ENCODE measurements at regions of chr17 and their contacts with region 1.

Region 1: DNA sequence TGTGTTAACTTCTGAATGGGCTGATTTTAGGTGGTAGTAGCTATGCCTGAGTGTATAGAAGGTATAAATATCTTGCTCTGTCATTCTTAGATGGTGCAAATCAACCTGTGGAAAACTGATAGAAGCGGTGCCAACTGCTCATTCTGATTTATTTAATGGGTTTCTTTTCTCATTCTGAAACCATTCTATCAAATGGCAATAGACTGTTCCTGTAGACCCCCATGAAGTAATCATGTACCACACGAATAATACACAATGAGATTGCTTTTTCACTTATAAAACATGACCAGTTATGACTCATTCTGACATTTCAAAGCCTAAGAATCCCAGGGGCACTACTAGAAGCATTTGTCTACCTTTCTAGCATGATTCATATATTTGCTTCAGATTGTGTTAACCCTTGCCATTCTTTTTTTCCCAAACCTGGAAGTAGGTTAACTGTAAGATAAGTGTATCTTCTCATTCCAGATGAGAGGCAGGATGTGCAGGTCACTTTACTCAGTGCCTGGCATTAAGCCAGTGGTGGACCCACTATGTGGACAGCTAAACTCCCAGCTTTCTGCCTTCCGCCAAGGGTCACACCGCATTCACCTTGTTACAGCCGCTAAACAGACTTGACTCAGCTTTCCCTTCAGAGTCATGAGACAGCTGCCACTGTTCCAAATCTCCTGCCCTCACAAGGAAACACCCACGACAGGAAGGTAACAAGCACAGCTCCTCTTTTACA is 16.4 kb upstream of the SLC16A11 start:
- DNase-seq: peak; percentile 69
- ATAC-seq: no peak
- H3K4me3 ChIP-seq: no peak overlapping the region
- H3K27ac ChIP-seq: no peak overlapping the region
- H3K4me1 ChIP-seq: 0 out of 2 replicates have a peak, but pooled peaks cover 2% of the 10 kb centered on the region
- H3K27me3 ChIP-seq: peaks cover 12% of the 10 kb centered on the region
- CTCF ChIP-seq: no peak
- POLR2A ChIP-seq: no peak
- RAD21 ChIP-seq: no peak

Region 2: DNA sequence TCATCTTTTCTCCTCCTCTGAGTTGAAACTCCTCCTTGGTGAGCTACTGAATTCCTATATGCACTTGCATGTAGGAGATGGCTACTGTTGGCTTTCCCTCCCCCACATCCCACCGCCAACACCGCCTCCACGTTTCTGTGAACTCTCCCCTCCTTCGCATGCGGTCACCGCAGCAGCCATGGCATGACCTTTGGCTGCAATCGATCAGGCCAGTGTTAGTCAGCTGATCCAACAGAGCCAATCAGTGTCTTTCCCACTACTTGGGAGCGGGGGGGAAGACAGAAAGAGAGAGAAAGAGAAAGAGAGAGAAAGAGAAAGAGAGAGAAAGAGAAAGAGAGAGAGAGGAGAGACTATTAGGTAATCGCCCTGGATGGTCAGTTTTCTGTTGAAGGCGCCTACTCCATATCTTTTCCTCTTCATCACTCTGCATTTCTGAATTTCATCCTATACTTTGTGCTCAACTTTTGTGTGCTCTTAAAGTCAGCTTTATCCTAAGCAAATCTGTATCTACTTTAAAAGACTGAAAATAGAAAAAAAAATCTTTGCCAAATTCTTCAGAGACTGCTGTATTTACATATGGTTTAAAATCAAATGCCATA is 96.1 kb after region 1 on chr17:
- CTCF ChIA-PET with region 1: no interaction called
- POLR2A ChIA-PET with region 1: interaction called, 10 read pairs
- dilution Hi-C with region 1: no loop called
- in situ Hi-C with region 1: no loop called
- intact Hi-C with region 1: no loop called
- DNase-seq: no peak
- ATAC-seq: no peak
- H3K4me3 ChIP-seq: no peak overlapping the region
- H3K27ac ChIP-seq: no peak overlapping the region
- H3K4me1 ChIP-seq: no peaks in the 10 kb centered on the region
- H3K27me3 ChIP-seq: peaks cover 26% of the 10 kb centered on the region
- CTCF ChIP-seq: no peak
- POLR2A ChIP-seq: no peak
- RAD21 ChIP-seq: no peak

Region 3: DNA sequence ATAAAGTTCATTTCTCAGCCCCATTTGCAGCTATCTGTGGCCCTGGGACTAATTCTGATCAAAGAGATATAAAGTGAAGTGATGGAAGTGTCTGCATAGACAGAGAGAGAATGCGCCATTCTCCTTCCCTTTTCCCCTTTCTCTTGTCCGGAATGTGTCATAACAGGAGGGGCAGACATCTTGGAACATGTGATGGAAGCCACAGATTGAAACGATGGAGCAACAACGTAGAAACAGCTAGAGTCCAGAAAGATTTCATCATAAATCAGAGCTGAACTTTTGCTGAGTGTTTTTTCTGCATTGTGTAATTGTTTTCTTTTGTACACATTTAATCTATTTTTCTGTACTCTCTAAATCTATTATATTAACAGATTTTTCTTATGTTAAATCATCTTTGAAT is 107.5 kb after region 1 on chr17:
- CTCF ChIA-PET with region 1: no interaction called
- POLR2A ChIA-PET with region 1: no interaction called
- dilution Hi-C with region 1: no loop called
- in situ Hi-C with region 1: no loop called
- intact Hi-C with region 1: no loop called
- DNase-seq: no peak
- ATAC-seq: no peak
- H3K4me3 ChIP-seq: no peak overlapping the region
- H3K27ac ChIP-seq: no peak overlapping the region
- H3K4me1 ChIP-seq: no peaks in the 10 kb centered on the region
- H3K27me3 ChIP-seq: no peaks in the 10 kb centered on the region; the same call in 1 of the 2 replicates
- CTCF ChIP-seq: no peak
- POLR2A ChIP-seq: no peak
- RAD21 ChIP-seq: no peak

Region 4: GRCh38 chr17:7263083-7264078 is 203.1 kb after region 1 on chr17:
- CTCF ChIA-PET with region 1: no interaction called
- POLR2A ChIA-PET with region 1: no interaction called
- dilution Hi-C with region 1: no loop called
- in situ Hi-C with region 1: no loop called
- intact Hi-C with region 1: no loop called
- DNase-seq: no peak
- ATAC-seq: no peak
- H3K4me3 ChIP-seq: no peak overlapping the region
- H3K27ac ChIP-seq: no peak overlapping the region
- H3K4me1 ChIP-seq: peaks cover 11% of the 10 kb centered on the region
- H3K27me3 ChIP-seq: peaks cover 13% of the 10 kb centered on the region; the same call in 1 of the 2 replicates
- CTCF ChIP-seq: no peak
- POLR2A ChIP-seq: no peak
- RAD21 ChIP-seq: no peak

Region 5: GRCh38 chr17:7548585-7549400 is 488.5 kb after region 1 on chr17 and contains the start of gene TNFSF12:
- CTCF ChIA-PET with region 1: no interaction called
- POLR2A ChIA-PET with region 1: no interaction called
- dilution Hi-C with region 1: no loop called
- in situ Hi-C with region 1: loop called (anchors 25 kb)
- intact Hi-C with region 1: no loop called
- DNase-seq: peak; percentile 7
- ATAC-seq: peak; percentile 90
- H3K4me3 ChIP-seq: peak within 1 kb of the TSS; percentile 67
- H3K27ac ChIP-seq: peak within 1 kb of the TSS; percentile 38
- H3K4me1 ChIP-seq: peaks cover 8% of the 10 kb centered on the region
- H3K27me3 ChIP-seq: no peaks in the 10 kb centered on the region
- CTCF ChIP-seq: peak; percentile 15; the same call in 1 of the 2 replicates
- POLR2A ChIP-seq: no peak
- RAD21 ChIP-seq: no peak; the same call in 1 of the 2 replicates
- total RNA-seq, gene TNFSF12: 2.7 and 3.6 TPM in 2 replicates

Measured in IMR-90 (cell line).